ENCODE measurements at regions of chr9 and their contacts with region 1.

Region 1: GRCh38 chr9:112793213-112793810 is 42.8 kb downstream of the SNX30 start:
- DNase-seq: peak; percentile 69 to 91 (median 84)
- ATAC-seq: peak; percentile 98
- H3K4me3 ChIP-seq: no peak overlapping the region
- H3K4me3 Mint-ChIP-seq: no peak overlapping the region
- H3K27ac ChIP-seq: no peak overlapping the region
- H3K27ac Mint-ChIP-seq: peak overlapping the region; percentile 38
- H3K4me1 ChIP-seq: no peaks in the 10 kb centered on the region
- H3K4me1 Mint-ChIP-seq: peaks cover 11% of the 10 kb centered on the region
- H3K27me3 ChIP-seq: no peaks in the 10 kb centered on the region
- H3K27me3 Mint-ChIP-seq: no peaks in the 10 kb centered on the region
- CTCF ChIP-seq: peak; percentile 65

Region 2: DNA sequence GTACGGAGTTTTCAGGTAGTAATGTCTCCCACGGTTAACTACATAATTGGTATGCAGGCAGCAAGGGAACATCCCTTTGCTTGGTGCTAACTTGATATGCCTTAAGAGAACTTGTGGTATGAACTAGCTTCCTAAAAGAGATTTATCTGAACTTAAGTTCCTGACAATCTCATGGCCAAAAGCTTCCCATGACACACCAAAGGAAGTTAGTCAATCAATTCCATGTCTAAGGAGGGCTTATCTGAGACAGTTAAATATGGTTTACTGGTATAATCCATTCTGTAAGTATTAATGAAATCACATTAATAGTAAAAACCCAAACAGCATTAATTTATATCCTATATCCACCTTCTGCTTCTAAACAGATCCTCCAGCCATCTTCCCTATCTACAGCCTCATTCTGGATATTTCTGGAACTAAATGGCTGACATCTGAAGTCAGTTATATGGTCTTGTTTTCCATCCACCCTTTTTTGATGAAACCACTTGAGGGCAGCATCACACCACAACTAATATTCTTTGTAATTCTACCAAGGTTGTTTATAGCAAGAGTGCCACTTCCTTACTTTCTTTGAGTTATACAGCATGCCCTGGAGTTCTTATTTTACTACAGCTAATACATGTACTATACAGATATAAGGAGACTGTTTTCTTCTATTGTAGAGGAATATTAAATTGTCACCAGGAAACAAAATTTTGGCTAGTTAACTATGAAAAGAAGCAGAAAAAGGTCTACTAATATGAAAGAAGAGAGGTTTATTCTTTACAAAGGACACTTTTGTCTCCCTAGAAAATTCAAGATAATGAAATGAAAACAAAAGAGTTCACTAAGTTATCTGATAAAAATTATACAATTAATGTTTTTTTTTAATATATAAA is 1033.3 kb before region 1 on chr9:
- CTCF ChIA-PET with region 1: interaction called, 3 read pairs
- POLR2A ChIA-PET with region 1: no interaction called
- intact Hi-C with region 1: loop called in 1 of 2 experiments (anchors 10 kb)
- DNase-seq: peak in 7 of 9 experiments; percentile 6 to 79 (median 41)
- ATAC-seq: peak; percentile 67
- H3K4me3 ChIP-seq: no peak overlapping the region
- H3K4me3 Mint-ChIP-seq: no peak overlapping the region
- H3K27ac ChIP-seq: no peak overlapping the region
- H3K27ac Mint-ChIP-seq: no peak overlapping the region
- H3K4me1 ChIP-seq: no peaks in the 10 kb centered on the region
- H3K4me1 Mint-ChIP-seq: peaks cover 4% of the 10 kb centered on the region
- H3K27me3 ChIP-seq: no peaks in the 10 kb centered on the region
- H3K27me3 Mint-ChIP-seq: no peaks in the 10 kb centered on the region
- CTCF ChIP-seq: peak; percentile 81

Region 3: DNA sequence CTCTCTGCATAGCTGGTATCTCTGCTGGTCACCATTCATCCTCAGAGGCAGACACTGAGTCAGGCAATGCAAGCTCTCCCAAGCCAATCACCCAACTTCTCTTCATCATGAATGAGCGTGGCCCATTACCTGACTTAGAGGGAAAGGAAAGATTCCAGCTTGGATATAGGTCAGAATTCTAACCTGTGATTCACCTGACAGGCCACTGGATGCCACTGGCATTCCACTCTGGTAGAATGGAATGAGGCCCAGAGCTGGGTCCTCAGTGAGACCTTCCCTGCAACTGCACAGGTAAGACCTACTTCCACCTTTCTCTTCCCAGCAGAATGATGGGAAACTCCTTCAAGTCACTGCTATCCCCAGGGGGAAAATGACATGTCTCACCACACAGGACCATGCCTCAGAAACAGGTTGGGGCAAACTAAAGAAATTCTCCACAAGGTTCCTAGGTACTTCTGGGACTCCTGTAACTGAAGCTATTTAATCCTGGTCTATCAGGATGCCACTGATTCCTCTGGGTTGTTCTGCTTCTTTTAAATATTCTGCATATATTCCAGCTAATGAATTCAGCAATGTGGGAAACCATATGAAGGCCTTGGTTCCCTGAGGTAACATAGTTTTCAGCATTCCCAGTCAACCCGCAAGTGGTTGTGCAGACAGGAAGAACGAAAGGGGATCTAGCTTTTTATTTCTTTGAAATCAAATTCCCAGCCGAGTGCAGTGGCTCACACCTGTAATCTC is 680.2 kb before region 1 on chr9:
- CTCF ChIA-PET with region 1: interaction called, 3 read pairs
- POLR2A ChIA-PET with region 1: no interaction called
- intact Hi-C with region 1: loop called in 1 of 2 experiments (anchors 1 kb)
- DNase-seq: peak in 4 of 9 experiments; percentile 13 to 50 (median 36)
- ATAC-seq: peak; percentile 48
- H3K4me3 ChIP-seq: no peak overlapping the region
- H3K4me3 Mint-ChIP-seq: no peak overlapping the region
- H3K27ac ChIP-seq: no peak overlapping the region
- H3K27ac Mint-ChIP-seq: no peak overlapping the region
- H3K4me1 ChIP-seq: no peaks in the 10 kb centered on the region
- H3K4me1 Mint-ChIP-seq: no peaks in the 10 kb centered on the region
- H3K27me3 ChIP-seq: no peaks in the 10 kb centered on the region
- H3K27me3 Mint-ChIP-seq: no peaks in the 10 kb centered on the region
- CTCF ChIP-seq: peak; percentile 55

Region 4: DNA sequence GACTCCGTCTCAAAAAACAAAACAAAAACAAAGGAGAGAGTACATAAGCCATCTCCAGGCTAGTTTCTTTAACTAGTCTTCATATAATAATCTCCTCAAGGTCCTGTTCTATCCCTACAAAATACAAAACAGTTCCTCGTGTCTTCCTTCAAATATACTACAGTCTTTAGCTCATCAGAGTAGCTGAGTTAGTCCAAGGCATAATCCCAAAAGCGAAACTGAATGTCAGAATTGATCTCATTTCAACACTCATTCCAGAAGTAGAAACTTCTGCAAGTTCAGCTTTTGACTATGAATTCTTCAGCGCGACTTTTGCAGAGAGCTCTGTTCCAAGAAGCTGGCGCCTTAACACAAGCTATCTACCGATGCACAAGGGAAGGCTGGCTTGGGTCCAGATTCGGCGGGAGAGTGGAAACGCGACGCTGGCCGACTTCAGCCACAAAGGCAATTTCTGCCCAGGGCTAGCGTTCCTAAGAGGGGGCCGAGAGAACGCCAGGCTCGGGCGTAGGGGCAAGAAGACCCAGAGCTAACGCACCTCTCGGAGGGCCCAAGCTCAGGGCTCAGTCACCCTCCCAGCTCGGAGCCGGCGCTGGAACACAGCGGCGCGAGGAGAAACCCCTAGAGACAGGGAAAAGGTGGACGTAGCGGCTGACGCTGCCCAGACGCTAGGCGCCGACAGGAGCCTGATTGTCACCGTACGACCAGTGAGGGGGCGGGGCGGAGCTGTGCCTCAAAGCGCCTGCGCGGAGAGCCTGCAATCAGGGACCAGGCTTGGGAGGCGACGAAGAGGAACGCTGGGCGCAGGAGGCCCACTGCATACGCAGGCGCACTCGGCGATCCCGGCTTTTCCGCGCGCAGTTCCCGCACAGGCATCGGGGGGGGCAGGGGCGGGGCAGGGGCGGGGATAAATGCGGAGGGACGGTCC is 413.9 kb before region 1 on chr9:
- CTCF ChIA-PET with region 1: no interaction called
- POLR2A ChIA-PET with region 1: no interaction called
- intact Hi-C with region 1: no loop called
- DNase-seq: peak; percentile 93 to 99 (median 97)
- ATAC-seq: peak; percentile 95
- H3K4me3 ChIP-seq: peak overlapping the region; percentile 81 to 96
- H3K4me3 Mint-ChIP-seq: peak overlapping the region; percentile 99
- H3K27ac ChIP-seq: peak overlapping the region; percentile 77 to 92
- H3K27ac Mint-ChIP-seq: peak overlapping the region; percentile 96
- H3K4me1 ChIP-seq: peaks cover 27% of the 10 kb centered on the region
- H3K4me1 Mint-ChIP-seq: peaks cover 54% of the 10 kb centered on the region
- H3K27me3 ChIP-seq: no peaks in the 10 kb centered on the region
- H3K27me3 Mint-ChIP-seq: no peaks in the 10 kb centered on the region
- CTCF ChIP-seq: no peak

Region 5: DNA sequence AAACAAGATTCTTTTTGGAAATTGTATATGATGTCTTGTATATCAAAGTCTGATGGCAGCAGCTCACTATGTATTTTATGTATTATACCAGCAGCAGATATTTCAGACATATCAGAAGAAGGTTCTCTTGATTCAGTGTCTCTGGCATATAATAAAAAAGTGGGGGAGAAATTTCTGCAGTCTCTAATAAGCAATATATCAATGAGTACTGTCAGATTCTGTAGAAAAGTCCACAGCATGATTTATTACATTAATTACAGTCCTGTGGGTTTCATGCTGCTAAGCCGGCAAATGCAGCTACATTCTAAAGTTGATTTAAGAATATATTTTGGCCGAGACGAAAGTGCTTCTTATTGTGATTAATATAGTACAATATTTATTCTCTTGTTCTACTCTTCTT is 193.6 kb before region 1 on chr9:
- CTCF ChIA-PET with region 1: no interaction called
- POLR2A ChIA-PET with region 1: no interaction called
- intact Hi-C with region 1: loop called in 1 of 2 experiments (anchors 10 kb)
- DNase-seq: no peak
- ATAC-seq: no peak
- H3K4me3 ChIP-seq: no peak overlapping the region
- H3K4me3 Mint-ChIP-seq: no peak overlapping the region
- H3K27ac ChIP-seq: no peak overlapping the region
- H3K27ac Mint-ChIP-seq: no peak overlapping the region
- H3K4me1 ChIP-seq: no peaks in the 10 kb centered on the region
- H3K4me1 Mint-ChIP-seq: no peaks in the 10 kb centered on the region
- H3K27me3 ChIP-seq: no peaks in the 10 kb centered on the region
- H3K27me3 Mint-ChIP-seq: no peaks in the 10 kb centered on the region
- CTCF ChIP-seq: no peak

Region 6: DNA sequence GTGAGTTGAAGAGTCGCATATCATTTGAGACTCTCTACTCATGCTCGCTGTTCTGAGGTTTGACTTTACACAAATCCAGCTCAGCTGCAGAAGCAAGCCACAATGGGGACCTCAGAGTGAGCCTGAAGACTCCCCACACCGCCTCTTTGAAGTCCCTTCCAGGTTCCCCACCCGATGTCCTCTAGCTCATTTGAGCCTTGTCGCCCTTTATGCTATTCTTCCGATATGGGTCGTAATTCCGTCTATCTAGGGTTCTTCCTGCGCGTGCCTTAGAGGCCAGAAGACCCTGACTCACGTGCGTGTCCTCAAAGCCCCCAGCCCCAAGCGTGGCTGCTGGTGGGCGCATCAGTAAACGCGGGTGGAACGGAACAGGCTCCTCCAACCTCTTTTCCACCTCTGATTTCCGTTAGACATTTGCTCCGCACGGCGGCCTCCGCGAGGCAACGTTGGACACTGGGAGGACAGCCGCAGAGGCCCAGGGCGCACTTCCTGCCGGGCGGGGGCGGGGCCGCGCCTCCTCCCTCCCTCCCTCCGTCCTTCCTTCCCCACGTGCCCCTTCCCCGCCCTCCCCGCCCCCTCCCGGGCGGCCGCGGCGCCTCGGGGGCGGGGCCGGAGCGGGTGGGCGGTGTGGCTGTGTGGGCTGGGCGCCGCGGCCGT is 43.1 kb before region 1 on chr9 and contains the start of gene SNX30:
- CTCF ChIA-PET with region 1: interaction called, 6 read pairs
- POLR2A ChIA-PET with region 1: interaction called, 4 read pairs
- intact Hi-C with region 1: loop called in 1 of 2 experiments (anchors 1 kb)
- DNase-seq: peak; percentile 42 to 91 (median 78)
- ATAC-seq: peak; percentile 67
- H3K4me3 ChIP-seq: peak within 1 kb of the TSS; percentile 66 to 72
- H3K4me3 Mint-ChIP-seq: peak within 1 kb of the TSS; percentile 91
- H3K27ac ChIP-seq: peak within 1 kb of the TSS; percentile 44 to 83
- H3K27ac Mint-ChIP-seq: peak within 1 kb of the TSS; percentile 94
- H3K4me1 ChIP-seq: peaks cover 47% of the 10 kb centered on the region
- H3K4me1 Mint-ChIP-seq: peaks cover 64% of the 10 kb centered on the region
- H3K27me3 ChIP-seq: no peaks in the 10 kb centered on the region
- H3K27me3 Mint-ChIP-seq: no peaks in the 10 kb centered on the region
- CTCF ChIP-seq: no peak
- total RNA-seq, gene SNX30: 6.0 to 8.1 TPM

Measured in CD8-positive, alpha-beta T cell (primary cell).